ENCODE measurements at regions of chr12 and their contacts with region 1.

Region 1: DNA sequence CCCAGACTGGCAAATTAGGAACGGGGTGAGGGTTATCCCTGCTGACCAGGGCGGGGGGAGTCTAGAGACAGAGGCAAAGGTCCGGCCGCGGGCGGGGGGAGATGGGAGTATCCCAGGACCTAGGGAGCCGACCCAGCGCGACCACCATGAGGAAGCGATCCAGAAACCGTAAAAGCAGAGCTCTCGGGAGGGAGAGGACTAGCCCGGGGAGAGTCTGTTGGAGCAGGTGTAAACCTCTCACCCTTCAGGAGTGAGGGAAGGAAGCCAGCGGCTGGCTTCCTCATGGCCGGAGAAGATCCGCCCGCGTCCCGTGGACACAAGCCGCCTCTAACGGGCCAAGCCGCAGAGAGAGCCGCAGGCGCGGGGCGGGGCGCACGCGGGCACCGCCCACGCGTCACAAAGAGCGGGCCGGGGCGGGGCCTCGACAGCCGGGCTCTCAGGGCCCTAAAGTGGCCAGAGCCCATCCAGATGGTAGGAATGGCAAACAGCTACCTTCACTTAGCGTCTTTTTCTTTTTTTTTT is at the start of gene ACRBP:
- DNase-seq: peak; percentile 71
- ATAC-seq: peak; percentile 83
- H3K4me3 Mint-ChIP-seq: peak within 1 kb of the TSS; percentile 84
- H3K27ac Mint-ChIP-seq: peak within 1 kb of the TSS; percentile 74
- H3K4me1 Mint-ChIP-seq: peaks cover 39% of the 10 kb centered on the region
- H3K27me3 Mint-ChIP-seq: no peaks in the 10 kb centered on the region
- CTCF ChIP-seq: no peak
- total RNA-seq, gene ACRBP: 5.4 and 7.7 TPM in 2 replicates

Region 2: DNA sequence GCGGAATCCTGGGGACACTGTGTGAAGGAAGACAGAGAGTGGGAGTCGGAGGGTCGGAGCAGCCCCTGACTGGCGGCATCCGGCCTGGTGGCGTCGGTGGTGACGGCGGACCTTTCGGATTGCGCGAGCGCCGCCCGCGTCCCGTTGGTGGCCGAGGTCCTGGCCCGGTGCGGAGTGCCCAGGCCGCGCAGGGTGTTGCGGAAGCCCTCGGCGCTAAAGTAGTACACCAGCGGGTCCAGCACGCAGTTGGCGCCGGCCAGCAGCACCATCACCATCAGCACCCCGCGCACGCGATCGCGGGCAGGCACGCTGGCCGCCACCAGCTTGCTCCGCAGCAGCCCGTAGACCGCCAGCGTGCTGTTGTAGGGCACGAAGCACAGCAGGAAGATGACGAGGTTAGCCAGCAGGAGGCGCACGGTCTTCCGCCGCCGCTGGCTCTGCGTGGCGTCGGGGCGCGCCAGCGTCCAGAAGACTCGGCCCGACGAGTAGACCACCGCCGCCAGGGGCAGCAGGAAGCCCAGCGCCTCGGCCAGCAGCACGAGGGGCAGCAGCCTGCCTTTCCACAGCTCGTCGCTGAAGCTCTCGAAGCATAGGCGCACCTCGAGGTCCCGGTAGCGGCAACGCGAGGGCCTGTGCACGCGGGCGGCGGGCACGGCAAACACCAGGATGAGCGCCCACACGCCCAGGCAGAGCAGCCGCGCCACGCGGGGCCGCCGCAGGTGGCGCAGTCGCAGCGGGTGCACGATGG is 26.8 kb before region 1 on chr12:
- CTCF ChIA-PET with region 1: interaction called, 26 read pairs
- POLR2A ChIA-PET with region 1: interaction called, 6 read pairs
- intact Hi-C with region 1: loop called (anchors 1 kb)
- DNase-seq: peak; percentile 53
- ATAC-seq: peak; percentile 66
- H3K4me3 Mint-ChIP-seq: no peak overlapping the region
- H3K27ac Mint-ChIP-seq: peak overlapping the region; percentile 73
- H3K4me1 Mint-ChIP-seq: peaks cover 40% of the 10 kb centered on the region
- H3K27me3 Mint-ChIP-seq: no peaks in the 10 kb centered on the region
- CTCF ChIP-seq: no peak

Measured in activated B cell treated with CpG ODN at 0.5 μM for 24 hours (primary cell).